CD8-positive, alpha-beta T cell (primary cell): ENCODE measurements at regions of chr7 and their contacts with region 1.

Region 1: DNA sequence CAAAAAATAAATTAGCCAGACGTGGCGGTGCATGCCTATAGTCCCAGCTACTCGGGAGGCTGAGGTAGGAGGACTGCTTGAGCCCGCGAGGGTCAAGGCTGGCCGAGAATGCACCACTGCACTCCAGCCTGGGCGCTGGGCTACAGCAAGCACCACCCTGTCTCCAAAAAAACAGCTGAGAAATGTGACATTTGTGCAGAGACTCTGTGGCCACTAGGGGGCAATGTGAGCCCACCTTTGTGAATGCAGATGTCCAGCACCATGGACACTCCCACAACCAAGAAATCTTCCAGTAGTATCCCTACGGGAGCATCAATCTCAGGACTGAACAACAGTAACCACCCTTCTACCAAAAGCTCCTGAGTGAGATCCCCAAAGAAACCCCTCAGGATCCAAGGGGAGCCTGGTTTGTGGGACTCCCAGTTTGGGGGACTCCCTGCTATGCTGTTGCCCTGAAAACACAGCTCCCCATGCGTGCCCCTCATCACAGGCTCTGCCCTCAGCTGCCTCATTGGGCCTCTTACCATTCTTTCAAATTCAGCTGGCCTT is 6.2 kb upstream of the AHCYL2 start:
- DNase-seq: peak; percentile 48 to 87 (median 80)
- ATAC-seq: peak; percentile 91
- H3K4me3 ChIP-seq: no peak overlapping the region
- H3K4me3 Mint-ChIP-seq: no peak overlapping the region
- H3K27ac ChIP-seq: no peak overlapping the region
- H3K27ac Mint-ChIP-seq: no peak overlapping the region
- H3K4me1 ChIP-seq: peaks cover 12% of the 10 kb centered on the region
- H3K4me1 Mint-ChIP-seq: peaks cover 13% of the 10 kb centered on the region
- H3K27me3 ChIP-seq: no peaks in the 10 kb centered on the region
- H3K27me3 Mint-ChIP-seq: peaks cover 4% of the 10 kb centered on the region
- CTCF ChIP-seq: peak; percentile 94

Region 2: DNA sequence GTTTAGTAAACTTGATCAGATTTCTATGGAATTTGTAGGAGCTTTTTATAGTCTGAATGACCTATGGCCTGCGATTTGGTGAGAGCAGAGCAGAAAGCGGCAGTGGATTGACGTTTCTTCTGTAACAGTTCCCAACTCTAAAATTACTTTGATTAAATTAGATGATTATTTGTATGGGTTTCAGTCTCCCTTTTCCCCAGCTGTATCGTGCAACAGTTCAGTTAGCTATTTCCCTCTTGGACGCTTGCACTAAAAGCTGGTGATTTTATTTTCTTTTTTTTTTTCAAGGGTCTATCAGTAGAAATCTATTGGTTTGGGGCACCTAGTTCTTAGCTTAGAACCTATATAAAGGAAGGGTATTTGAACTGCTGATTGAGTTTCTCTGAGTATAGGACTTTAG is 13.1 kb after region 1 on chr7:
- CTCF ChIA-PET with region 1: interaction called, 51 read pairs
- POLR2A ChIA-PET with region 1: no interaction called
- intact Hi-C with region 1: no loop called
- DNase-seq: no peak
- ATAC-seq: no peak
- H3K4me3 ChIP-seq: no peak overlapping the region
- H3K4me3 Mint-ChIP-seq: no peak overlapping the region
- H3K27ac ChIP-seq: no peak overlapping the region
- H3K27ac Mint-ChIP-seq: no peak overlapping the region
- H3K4me1 ChIP-seq: peaks cover 4% of the 10 kb centered on the region
- H3K4me1 Mint-ChIP-seq: peaks cover 32% of the 10 kb centered on the region
- H3K27me3 ChIP-seq: no peaks in the 10 kb centered on the region
- H3K27me3 Mint-ChIP-seq: no peaks in the 10 kb centered on the region
- CTCF ChIP-seq: no peak

Region 3: GRCh38 chr7:129252128-129252527 is 33.5 kb after region 1 on chr7:
- CTCF ChIA-PET with region 1: interaction called, 37 read pairs
- POLR2A ChIA-PET with region 1: interaction called, 4 read pairs
- intact Hi-C with region 1: no loop called
- DNase-seq: no peak
- ATAC-seq: no peak
- H3K4me3 ChIP-seq: no peak overlapping the region
- H3K4me3 Mint-ChIP-seq: no peak overlapping the region
- H3K27ac ChIP-seq: no peak overlapping the region
- H3K27ac Mint-ChIP-seq: no peak overlapping the region
- H3K4me1 ChIP-seq: peaks cover 2% of the 10 kb centered on the region
- H3K4me1 Mint-ChIP-seq: peaks cover 8% of the 10 kb centered on the region
- H3K27me3 ChIP-seq: no peaks in the 10 kb centered on the region
- H3K27me3 Mint-ChIP-seq: no peaks in the 10 kb centered on the region
- CTCF ChIP-seq: no peak

Region 4: DNA sequence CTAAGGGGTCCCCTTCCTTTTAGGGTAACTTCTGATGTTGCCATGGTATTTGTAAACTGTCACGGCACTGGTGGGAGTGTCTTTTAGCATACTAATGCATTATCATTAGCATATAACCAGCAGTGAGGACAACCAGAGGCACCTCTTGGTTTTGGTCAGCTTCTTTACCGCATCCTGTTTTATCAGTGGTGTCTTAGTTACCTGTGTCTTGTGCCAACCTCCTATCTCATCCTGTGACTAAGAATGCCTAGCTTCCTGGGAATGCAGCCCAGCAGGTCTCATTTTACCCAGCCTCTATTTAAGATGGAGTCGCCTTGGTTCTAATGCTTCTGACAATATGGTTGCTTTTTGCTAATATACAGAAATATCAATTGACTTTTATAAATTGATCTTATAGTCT is 61.2 kb after region 1 on chr7:
- CTCF ChIA-PET with region 1: interaction called, 266 read pairs
- POLR2A ChIA-PET with region 1: no interaction called
- intact Hi-C with region 1: no loop called
- DNase-seq: no peak
- ATAC-seq: no peak
- H3K4me3 ChIP-seq: no peak overlapping the region
- H3K4me3 Mint-ChIP-seq: no peak overlapping the region
- H3K27ac ChIP-seq: no peak overlapping the region
- H3K27ac Mint-ChIP-seq: no peak overlapping the region
- H3K4me1 ChIP-seq: no peaks in the 10 kb centered on the region
- H3K4me1 Mint-ChIP-seq: peaks cover 2% of the 10 kb centered on the region
- H3K27me3 ChIP-seq: no peaks in the 10 kb centered on the region
- H3K27me3 Mint-ChIP-seq: no peaks in the 10 kb centered on the region
- CTCF ChIP-seq: no peak

Region 5: DNA sequence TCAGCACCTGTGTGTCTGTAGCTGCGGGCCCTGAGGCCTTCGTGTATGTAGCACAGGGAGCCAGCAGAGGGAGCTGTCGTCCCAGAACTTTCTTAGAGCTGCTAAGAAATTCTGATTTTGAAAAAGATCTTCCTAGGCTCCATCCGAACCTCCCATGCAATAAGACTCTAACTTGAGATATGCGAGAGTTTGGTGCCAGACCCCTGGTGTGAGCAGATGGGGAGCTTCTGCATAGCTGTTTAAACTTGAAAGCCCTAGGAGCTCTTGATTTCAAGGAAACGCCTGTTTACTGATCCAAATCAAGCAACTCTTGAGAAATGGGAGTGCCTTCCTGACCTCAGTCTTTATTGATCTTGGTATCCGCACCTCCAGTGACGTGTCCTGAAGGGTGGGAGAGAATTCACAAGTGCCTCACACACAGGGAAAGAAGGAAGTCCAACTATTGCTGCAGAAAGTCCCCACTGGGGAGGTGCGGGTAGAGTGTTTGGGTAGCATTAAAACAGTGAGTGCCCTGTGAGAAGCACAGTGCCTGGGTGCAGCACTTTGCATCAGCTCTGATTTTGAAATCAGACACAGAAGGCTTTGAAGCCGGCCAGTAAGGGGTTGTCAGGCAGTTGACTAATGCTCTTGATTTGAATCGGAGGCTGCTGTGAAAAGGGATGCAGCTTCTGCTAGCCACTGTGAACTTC is 149.3 kb after region 1 on chr7:
- CTCF ChIA-PET with region 1: interaction called, 10 read pairs
- POLR2A ChIA-PET with region 1: no interaction called
- intact Hi-C with region 1: loop called in 1 of 2 experiments (anchors 10 kb)
- DNase-seq: peak; percentile 40 to 80 (median 73)
- ATAC-seq: peak; percentile 88
- H3K4me3 ChIP-seq: no peak overlapping the region
- H3K4me3 Mint-ChIP-seq: peak overlapping the region; percentile 20
- H3K27ac ChIP-seq: no peak overlapping the region
- H3K27ac Mint-ChIP-seq: no peak overlapping the region
- H3K4me1 ChIP-seq: no peaks in the 10 kb centered on the region
- H3K4me1 Mint-ChIP-seq: peaks cover 13% of the 10 kb centered on the region
- H3K27me3 ChIP-seq: no peaks in the 10 kb centered on the region
- H3K27me3 Mint-ChIP-seq: no peaks in the 10 kb centered on the region
- CTCF ChIP-seq: peak; percentile 69